Prostate gland (tissue), 2 donors: ENCODE measurements at regions of chr17 and their contacts with region 1.

Region 1: GRCh38 chr17:72445055-72445991 is 324.5 kb downstream of the SOX9 start:
- DNase-seq: no peak
- H3K4me3 ChIP-seq: no peak overlapping the region
- H3K27ac ChIP-seq: no peak overlapping the region
- H3K4me1 ChIP-seq: no peaks in the 10 kb centered on the region
- H3K27me3 ChIP-seq: no peaks in the 10 kb centered on the region
- CTCF ChIP-seq: no peak
- POLR2A ChIP-seq: no peak

Region 2: GRCh38 chr17:72392056-72393010 is 53.0 kb before region 1 on chr17:
- intact Hi-C with region 1: loop called (anchors 10 kb)
- DNase-seq: no peak
- H3K4me3 ChIP-seq: no peak overlapping the region
- H3K27ac ChIP-seq: no peak overlapping the region
- H3K4me1 ChIP-seq: peaks cover 7% of the 10 kb centered on the region
- H3K27me3 ChIP-seq: no peaks in the 10 kb centered on the region
- CTCF ChIP-seq: no peak
- POLR2A ChIP-seq: no peak